MCF 10A (cell line): ENCODE measurements at regions of chrX and their contacts with region 1.

Region 1: DNA sequence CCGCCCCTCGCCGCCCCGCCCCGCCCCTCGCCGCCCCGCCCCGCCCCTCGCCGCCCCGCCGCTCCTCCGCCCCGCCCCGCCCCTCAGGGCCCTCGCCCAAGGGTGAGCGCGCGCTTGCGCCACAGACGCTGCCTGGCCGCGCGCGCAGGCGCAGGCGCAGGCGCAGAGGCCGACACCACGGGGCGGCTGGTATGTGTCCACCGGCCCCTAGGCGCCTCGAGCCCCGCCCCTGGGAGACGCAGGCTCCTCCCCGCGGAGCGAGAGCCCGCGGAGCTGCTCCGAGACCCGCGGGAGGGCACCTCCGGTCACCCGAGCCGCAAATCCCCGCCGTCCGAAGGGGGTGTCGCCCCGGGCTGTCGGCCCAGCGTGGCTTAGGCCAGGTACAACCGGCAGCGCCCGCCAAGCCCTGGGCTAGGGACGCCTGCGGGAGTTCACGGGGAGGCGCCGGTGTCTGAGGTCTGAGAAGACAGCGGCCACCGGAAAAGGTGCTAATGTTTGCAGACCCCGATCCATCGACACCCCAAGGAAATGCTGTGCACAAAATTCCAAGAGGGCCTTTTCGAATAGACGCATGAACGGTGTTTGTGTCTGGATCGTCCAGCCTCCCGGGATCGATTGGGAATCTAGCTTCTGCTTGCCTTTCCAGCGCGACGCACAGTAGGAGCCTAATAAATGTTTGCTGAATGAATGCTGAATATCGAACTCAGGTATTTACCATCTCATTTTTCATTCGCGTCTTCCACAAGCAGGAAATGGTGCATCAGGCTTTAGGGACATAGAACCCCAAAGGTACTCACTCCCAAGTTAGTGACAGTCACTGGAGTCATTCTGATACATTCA is 473 bp upstream of the CCNQ start:
- DNase-seq: peak; percentile 81
- H3K4me3 Mint-ChIP-seq: peak overlapping the region; percentile 72
- H3K27ac Mint-ChIP-seq: peak overlapping the region; percentile 14
- H3K4me1 Mint-ChIP-seq: no peaks in the 10 kb centered on the region
- H3K27me3 Mint-ChIP-seq: no peaks in the 10 kb centered on the region
- CTCF ChIP-seq: no peak

Region 2: DNA sequence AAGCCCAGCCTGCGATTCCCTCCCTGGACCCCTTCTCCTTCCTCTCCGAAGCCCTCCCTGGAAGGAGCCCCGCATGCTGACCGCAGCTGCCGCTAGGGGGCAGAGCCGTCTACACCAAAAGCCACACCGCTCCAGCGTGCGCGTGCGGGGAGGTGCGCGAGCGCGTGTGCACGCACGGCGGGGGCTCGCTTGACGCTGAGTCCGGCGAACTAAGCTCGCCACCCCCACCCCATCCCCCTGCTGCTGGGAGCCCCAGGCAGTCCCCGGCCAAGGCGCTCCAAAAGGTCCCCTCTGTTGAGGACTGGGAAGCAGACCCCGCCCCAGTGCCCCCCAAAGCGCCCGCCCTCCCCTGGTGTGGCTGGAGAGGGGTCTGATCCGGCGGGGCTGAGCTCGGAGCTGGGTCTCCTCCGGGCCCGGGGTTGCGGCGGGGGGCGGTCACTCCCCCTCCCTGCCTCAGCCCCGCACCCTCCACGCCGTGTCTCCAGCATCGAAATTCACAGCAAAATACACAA is 10.6 kb after region 1 on chrX:
- CTCF ChIA-PET with region 1: interaction called, 16 read pairs
- POLR2A ChIA-PET with region 1: interaction called, 6 read pairs
- intact Hi-C with region 1: no loop called
- DNase-seq: peak; percentile 61
- H3K4me3 Mint-ChIP-seq: peak overlapping the region; percentile 10
- H3K27ac Mint-ChIP-seq: no peak overlapping the region
- H3K4me1 Mint-ChIP-seq: no peaks in the 10 kb centered on the region
- H3K27me3 Mint-ChIP-seq: peaks cover 19% of the 10 kb centered on the region
- CTCF ChIP-seq: peak; percentile 67